H1 (cell line): ENCODE measurements at regions of chr1 and their contacts with region 1.

Region 1: GRCh38 chr1:67214420-67215174 is 48.3 kb downstream of the IL23R start:
- DNase-seq: no peak
- H3K4me3 ChIP-seq: no peak overlapping the region
- H3K27ac ChIP-seq: no peak overlapping the region
- H3K4me1 ChIP-seq: peaks cover 0 to 2% (median 0%) of the 10 kb centered on the region in 4 experiments; a peak in 1 of 7 replicates
- H3K27me3 ChIP-seq: no peaks in the 10 kb centered on the region
- CTCF ChIP-seq: peak in 2 of 3 experiments; percentile 64 to 69; a peak in 3 of 4 replicates
- EP300 ChIP-seq: no peak
- POLR2A ChIP-seq: no peak
- RAD21 ChIP-seq: peak; percentile 37 to 61

Region 2: GRCh38 chr1:66996018-66996682 is 218.4 kb before region 1 on chr1:
- CTCF ChIA-PET with region 1: interaction called, 176 read pairs
- POLR2A ChIA-PET with region 1: no interaction called
- DNase-seq: peak; percentile 19 to 58
- H3K4me3 ChIP-seq: no peak overlapping the region
- H3K27ac ChIP-seq: no peak overlapping the region
- H3K4me1 ChIP-seq: no peaks in the 10 kb centered on the region
- H3K27me3 ChIP-seq: no peaks in the 10 kb centered on the region
- CTCF ChIP-seq: peak in 2 of 3 experiments; percentile 83 to 86; a peak in 3 of 4 replicates
- EP300 ChIP-seq: no peak
- POLR2A ChIP-seq: no peak
- RAD21 ChIP-seq: peak; percentile 96 to 97

Region 3: DNA sequence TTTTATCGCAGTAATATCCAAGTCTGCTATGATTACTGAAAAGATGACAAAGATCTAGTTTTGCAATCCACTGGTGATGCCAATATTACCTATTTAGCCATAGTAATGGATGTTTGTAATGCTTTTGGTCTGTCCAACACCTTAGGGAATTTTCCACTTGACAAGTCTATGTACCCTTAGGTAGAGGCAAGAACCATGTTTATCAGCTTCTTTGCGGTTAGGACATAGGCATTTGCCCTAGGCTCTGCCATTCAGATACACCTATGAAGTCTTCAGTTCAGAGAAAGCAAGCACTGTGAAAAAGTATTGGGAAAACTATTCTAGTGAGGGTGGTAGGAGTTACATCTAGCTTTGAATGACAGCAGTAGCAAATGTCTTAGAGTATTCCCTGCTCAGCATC is 120.4 kb before region 1 on chr1:
- CTCF ChIA-PET with region 1: no interaction called
- POLR2A ChIA-PET with region 1: no interaction called
- DNase-seq: no peak
- H3K4me3 ChIP-seq: no peak overlapping the region
- H3K27ac ChIP-seq: no peak overlapping the region
- H3K4me1 ChIP-seq: peaks cover 1 to 10% (median 7%) of the 10 kb centered on the region in 4 experiments; a peak in 6 of 7 replicates
- H3K27me3 ChIP-seq: no peaks in the 10 kb centered on the region
- CTCF ChIP-seq: no peak
- EP300 ChIP-seq: no peak
- POLR2A ChIP-seq: no peak
- RAD21 ChIP-seq: no peak

Region 4: DNA sequence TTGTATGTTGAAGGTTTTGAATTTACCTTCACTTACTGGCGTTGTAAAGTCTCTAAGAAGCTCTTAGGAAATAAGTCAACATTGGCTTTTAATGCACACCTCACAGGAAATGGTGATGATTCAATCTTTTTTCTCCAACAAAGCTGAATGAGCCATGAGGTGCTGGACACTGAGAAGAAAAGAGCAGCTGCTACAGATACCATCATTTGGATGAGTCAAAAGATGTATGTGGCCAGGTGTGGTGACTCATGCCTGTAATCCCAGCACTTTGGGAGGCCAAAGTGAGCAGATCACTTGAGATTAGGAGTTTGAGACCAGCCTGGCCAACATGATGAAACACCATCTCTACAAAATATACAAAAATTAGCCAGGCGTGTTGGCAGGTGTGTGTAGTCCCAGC is 51.6 kb before region 1 on chr1:
- CTCF ChIA-PET with region 1: interaction called, 98 read pairs
- POLR2A ChIA-PET with region 1: no interaction called
- DNase-seq: no peak
- H3K4me3 ChIP-seq: no peak overlapping the region
- H3K27ac ChIP-seq: no peak overlapping the region
- H3K4me1 ChIP-seq: no peaks in the 10 kb centered on the region
- H3K27me3 ChIP-seq: no peaks in the 10 kb centered on the region
- CTCF ChIP-seq: no peak
- EP300 ChIP-seq: no peak
- POLR2A ChIP-seq: no peak
- RAD21 ChIP-seq: no peak

Region 5: DNA sequence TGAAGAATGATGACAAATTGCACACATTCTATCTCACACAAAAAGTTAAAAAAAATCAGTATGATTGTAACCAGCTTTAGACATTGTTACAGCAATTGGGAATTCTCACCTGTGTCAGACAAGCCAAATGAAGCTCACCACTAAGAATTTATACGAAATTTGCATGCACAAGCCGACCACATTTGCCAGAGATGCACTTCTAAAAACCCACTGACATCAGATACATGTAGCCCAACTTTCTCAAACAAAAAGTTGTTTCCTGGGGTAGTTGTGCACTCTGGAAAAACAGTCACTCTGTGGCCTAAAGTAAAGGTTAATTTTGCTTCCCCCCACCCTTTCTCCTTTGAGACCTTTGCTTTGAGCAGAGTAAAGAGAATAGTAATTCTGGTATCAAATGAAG is 25.1 kb after region 1 on chr1:
- CTCF ChIA-PET with region 1: interaction called, 20 read pairs
- POLR2A ChIA-PET with region 1: no interaction called
- DNase-seq: no peak
- H3K4me3 ChIP-seq: no peak overlapping the region
- H3K27ac ChIP-seq: no peak overlapping the region
- H3K4me1 ChIP-seq: no peaks in the 10 kb centered on the region
- H3K27me3 ChIP-seq: no peaks in the 10 kb centered on the region
- CTCF ChIP-seq: no peak
- EP300 ChIP-seq: no peak
- POLR2A ChIP-seq: no peak
- RAD21 ChIP-seq: no peak

Region 6: GRCh38 chr1:67314696-67315095 is 100.1 kb after region 1 on chr1:
- CTCF ChIA-PET with region 1: interaction called, 13 read pairs
- POLR2A ChIA-PET with region 1: no interaction called
- DNase-seq: no peak
- H3K4me3 ChIP-seq: no peak overlapping the region
- H3K27ac ChIP-seq: no peak overlapping the region
- H3K4me1 ChIP-seq: peaks cover 0 to 3% (median 0%) of the 10 kb centered on the region in 4 experiments; a peak in 1 of 7 replicates
- H3K27me3 ChIP-seq: no peaks in the 10 kb centered on the region
- CTCF ChIP-seq: no peak
- EP300 ChIP-seq: no peak
- POLR2A ChIP-seq: no peak
- RAD21 ChIP-seq: no peak

Region 7: GRCh38 chr1:67460676-67461500 is 246.3 kb after region 1 on chr1:
- CTCF ChIA-PET with region 1: interaction called, 10 read pairs
- POLR2A ChIA-PET with region 1: no interaction called
- DNase-seq: no peak
- H3K4me3 ChIP-seq: no peak overlapping the region
- H3K27ac ChIP-seq: no peak overlapping the region
- H3K4me1 ChIP-seq: peaks cover 4 to 30% (median 27%) of the 10 kb centered on the region in 4 experiments; a peak in 6 of 7 replicates
- H3K27me3 ChIP-seq: no peaks in the 10 kb centered on the region
- CTCF ChIP-seq: no peak
- EP300 ChIP-seq: no peak
- POLR2A ChIP-seq: no peak
- RAD21 ChIP-seq: no peak